ENCODE measurements at regions of chr3 and their contacts with region 1.

Region 1: DNA sequence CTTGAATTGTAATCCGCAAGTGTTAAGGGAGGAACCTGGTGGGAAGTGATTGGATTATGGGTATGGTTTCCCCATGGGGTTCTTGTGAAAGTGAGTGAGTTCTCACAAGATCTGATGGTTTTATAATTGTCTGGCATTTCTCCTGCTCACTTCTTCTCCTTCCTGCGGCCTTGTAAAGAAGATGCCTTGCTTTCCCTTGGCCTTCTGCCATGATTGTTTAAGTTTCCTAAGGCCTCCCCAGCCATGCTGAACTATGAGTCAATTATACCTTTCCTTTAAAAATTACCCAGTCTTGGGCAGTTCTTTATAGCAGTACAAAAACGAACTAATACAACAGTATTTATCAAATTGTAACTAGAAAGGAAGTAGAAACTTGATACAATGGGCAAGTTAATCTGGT is 31.9 kb downstream of the IFT57 start:
- DNase-seq: no peak
- H3K4me3 ChIP-seq: no peak overlapping the region
- H3K27ac ChIP-seq: no peak overlapping the region
- H3K4me1 ChIP-seq: no peaks in the 10 kb centered on the region
- H3K27me3 ChIP-seq: no peaks in the 10 kb centered on the region
- CTCF ChIP-seq: no peak
- POLR2A ChIP-seq: no peak

Region 2: GRCh38 chr3:106985721-106986120 is 1204.6 kb before region 1 on chr3:
- intact Hi-C with region 1: loop called (anchors 5 kb)
- DNase-seq: no peak
- H3K4me3 ChIP-seq: no peak overlapping the region
- H3K27ac ChIP-seq: no peak overlapping the region
- H3K4me1 ChIP-seq: no peaks in the 10 kb centered on the region
- H3K27me3 ChIP-seq: no peaks in the 10 kb centered on the region
- CTCF ChIP-seq: no peak
- POLR2A ChIP-seq: no peak